MCF 10A (cell line): ENCODE measurements at regions of chr1 and their contacts with region 1.

Region 1: DNA sequence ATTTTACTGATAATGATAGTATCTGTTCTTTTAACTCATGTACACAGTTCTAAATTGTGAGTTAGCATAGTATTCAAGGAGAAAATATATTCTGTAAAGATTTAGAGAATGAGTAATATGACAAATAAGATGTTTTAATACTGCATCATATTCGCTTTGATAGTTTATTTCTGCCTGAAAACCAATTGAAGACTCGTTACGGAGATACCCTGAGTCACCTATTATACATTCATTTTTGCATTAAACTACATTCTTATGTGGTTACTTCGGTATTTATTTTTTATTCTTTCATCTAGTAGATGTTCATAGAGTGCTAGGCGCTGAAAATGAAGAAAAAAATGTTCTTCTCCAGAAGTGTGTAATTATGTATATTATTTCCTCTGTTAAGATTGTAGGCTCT is 5.3 kb downstream of the UHMK1 start:
- DNase-seq: no peak
- H3K4me3 Mint-ChIP-seq: no peak overlapping the region
- H3K27ac Mint-ChIP-seq: no peak overlapping the region
- H3K4me1 Mint-ChIP-seq: peaks cover 12% of the 10 kb centered on the region
- H3K27me3 Mint-ChIP-seq: no peaks in the 10 kb centered on the region
- CTCF ChIP-seq: no peak

Region 2: DNA sequence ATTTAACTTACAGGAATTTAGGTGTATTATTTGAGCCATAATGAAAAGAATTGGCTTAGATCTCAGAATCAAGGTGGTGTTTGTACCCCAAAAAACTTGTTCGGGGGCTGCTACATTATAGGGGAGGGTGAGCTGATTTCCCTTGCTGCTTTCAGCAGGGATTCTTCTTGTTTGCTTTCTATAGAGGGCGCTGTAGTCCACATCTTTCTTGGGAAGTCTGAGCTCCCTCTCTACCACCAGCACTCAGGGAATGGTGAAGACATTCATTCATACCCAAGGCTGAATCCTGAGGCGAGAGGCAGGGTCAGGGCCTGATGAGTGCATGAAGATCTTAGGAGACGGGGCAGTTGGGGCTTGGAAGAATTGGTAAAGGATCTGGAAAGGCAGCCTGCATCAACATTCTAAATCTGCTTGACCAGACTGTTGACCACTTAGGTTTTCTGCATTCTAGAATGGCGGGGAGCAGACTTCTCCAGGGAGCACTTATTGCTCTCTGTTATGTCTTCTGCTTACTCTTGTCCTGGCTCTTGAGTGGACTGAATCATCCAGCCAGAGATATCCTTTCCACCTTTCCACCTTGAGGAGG is 145.2 kb before region 1 on chr1:
- CTCF ChIA-PET with region 1: no interaction called
- POLR2A ChIA-PET with region 1: no interaction called
- intact Hi-C with region 1: loop called (anchors 2 kb)
- DNase-seq: peak; percentile 80
- H3K4me3 Mint-ChIP-seq: no peak overlapping the region
- H3K27ac Mint-ChIP-seq: no peak overlapping the region
- H3K4me1 Mint-ChIP-seq: peaks cover 8% of the 10 kb centered on the region
- H3K27me3 Mint-ChIP-seq: no peaks in the 10 kb centered on the region
- CTCF ChIP-seq: peak; percentile 83

Region 3: DNA sequence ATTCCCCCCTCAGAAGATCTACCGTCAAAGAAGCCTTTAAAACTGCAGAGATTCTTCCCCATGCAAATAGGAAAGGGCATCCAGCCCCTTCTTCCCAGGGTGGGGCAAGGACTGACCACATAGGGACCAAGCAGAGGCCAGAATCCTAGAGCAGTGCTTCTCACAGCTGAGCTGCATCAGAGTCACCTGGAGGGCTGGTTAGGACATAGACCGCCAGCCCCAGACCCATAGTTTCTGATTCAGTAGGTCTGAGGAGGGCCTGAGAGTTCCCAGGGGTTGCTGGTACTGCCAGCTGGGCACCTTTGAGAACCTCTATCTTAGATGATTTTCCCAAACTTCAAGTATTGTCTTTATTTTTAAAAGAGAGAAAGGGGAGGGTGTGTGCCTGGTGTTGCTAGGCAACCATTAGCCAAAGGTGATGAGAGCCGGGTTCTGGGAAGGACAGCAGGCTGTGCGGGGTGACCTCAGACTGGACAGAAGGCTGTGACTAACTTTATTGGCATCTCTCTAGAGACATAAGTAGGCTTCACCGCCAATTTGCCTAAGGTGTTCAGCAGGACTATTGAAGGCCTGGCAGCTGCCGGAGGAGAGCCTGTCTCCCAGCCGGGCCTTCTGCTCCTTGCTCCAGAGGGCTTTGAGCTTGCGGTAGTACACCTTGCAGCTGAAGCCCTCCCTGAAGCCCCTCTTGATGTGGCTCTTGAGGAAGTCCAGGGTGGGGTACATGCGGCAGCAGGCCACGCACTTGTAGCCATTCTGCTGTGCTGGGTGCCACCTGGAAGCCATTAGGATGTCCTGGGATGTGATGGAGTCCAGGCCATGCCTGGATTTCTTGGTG is 129.2 kb before region 1 on chr1:
- CTCF ChIA-PET with region 1: no interaction called
- POLR2A ChIA-PET with region 1: no interaction called
- intact Hi-C with region 1: no loop called
- DNase-seq: peak; percentile 91
- H3K4me3 Mint-ChIP-seq: peak overlapping the region; percentile 6
- H3K27ac Mint-ChIP-seq: peak overlapping the region; percentile 92
- H3K4me1 Mint-ChIP-seq: peaks cover 33% of the 10 kb centered on the region
- H3K27me3 Mint-ChIP-seq: no peaks in the 10 kb centered on the region
- CTCF ChIP-seq: no peak

Region 4: GRCh38 chr1:162456324-162456723 is 46.6 kb before region 1 on chr1:
- CTCF ChIA-PET with region 1: no interaction called
- POLR2A ChIA-PET with region 1: no interaction called
- intact Hi-C with region 1: no loop called
- DNase-seq: no peak
- H3K4me3 Mint-ChIP-seq: no peak overlapping the region
- H3K27ac Mint-ChIP-seq: no peak overlapping the region
- H3K4me1 Mint-ChIP-seq: no peaks in the 10 kb centered on the region
- H3K27me3 Mint-ChIP-seq: no peaks in the 10 kb centered on the region
- CTCF ChIP-seq: peak; percentile 15